ENCODE measurements at regions of chr2 and their contacts with region 1.

Region 1: GRCh38 chr2:150410809-150411208 is 76.7 kb downstream of the RND3 start:
- DNase-seq: no peak
- H3K4me3 ChIP-seq: no peak overlapping the region
- CTCF ChIP-seq: no peak
- POLR2A ChIP-seq: no peak

Region 2: DNA sequence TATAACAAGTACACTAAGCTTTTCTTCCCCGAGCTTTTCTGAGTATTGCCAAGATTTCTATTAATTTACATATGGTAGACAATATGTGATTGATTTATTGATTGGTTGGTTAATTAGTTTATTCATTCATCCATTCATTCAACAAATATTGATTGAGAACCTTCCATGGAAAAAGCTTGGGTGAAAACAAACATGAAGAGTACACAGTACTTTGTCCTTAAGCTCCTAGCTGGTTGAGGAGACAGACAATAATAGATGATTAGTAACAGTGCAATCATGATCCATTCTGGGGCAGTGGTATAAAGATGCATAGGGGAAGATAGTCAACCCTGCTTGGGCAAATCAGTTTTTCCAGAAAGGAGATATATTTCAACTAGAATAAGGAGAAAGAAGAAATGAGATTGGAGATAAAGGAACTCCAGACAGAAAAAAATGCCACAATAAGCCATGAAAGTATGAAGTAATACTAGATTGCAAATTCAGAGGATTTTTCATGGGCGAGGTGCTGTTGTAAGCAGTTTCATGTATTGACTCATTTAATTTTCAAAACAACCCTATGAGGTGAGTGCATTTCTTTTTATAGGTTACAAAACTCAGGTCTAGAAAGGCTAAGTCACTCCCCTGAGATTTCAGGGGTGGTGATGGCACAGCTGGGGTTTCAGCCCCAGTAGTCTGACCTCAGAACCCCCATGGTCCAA is 52.9 kb before region 1 on chr2:
- intact Hi-C with region 1: loop called (anchors 1 kb)
- DNase-seq: no peak
- H3K4me3 ChIP-seq: no peak overlapping the region
- CTCF ChIP-seq: no peak
- POLR2A ChIP-seq: no peak

Region 3: GRCh38 chr2:151120011-151120410 is 709.2 kb after region 1 on chr2:
- intact Hi-C with region 1: no loop called
- DNase-seq: no peak
- H3K4me3 ChIP-seq: no peak overlapping the region
- CTCF ChIP-seq: no peak
- POLR2A ChIP-seq: no peak

Measured in lower leg skin (tissue), 4 donors.